Activated naive CD4-positive, alpha-beta T cell treated with anti-CD3 and anti-CD28 coated beads for 36 hours (primary cell): ENCODE measurements at regions of chr3 and their contacts with region 1.

Region 1: DNA sequence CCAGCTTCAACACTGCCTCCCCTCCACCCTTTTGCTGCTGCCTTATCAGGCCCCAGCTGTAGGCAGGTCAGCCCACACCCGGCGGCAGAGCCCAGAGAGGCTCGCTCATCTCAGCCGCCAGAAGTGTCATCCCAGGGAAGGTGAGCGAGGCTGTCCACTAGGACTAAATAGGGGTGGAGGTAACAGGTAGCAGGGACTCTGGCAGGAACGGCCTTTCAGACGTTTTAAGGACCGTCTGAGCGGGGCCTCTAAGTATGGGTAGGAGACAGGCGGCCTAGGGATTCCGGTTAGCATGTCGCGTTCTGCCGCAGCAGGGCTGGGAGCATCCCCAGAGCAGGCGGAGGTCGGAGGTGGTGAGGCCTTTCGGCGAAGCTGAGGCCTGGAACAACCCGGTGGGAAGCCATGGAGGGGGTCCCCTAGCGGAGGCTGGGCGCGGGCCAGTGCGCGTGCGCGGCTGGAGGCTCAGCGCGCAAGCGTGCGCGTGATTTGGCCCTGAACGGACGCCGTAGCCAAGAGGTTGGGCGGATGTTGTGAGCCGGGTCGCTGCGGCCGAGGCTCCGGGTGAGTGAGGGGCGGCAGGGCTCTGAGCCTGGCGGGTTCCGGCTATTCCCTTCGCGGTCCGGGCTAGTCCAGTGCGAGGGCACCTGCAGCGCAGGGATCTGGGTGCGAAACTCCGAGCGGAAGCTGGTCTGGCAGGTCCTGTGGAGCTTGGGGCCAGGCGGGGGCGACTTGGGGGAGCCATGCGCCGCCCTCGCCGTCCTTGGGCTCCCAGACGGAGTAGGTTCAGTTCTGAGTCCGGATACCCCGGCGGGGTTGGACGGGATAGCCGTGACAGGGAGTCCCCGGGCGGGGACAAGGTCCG is at the starts of genes MST1 and RNF123:
- DNase-seq: peak; percentile 93
- H3K4me3 Mint-ChIP-seq: peak within 1 kb of the TSS; percentile 97
- H3K27ac Mint-ChIP-seq: peak within 1 kb of the TSS; percentile 83
- H3K4me1 Mint-ChIP-seq: peaks cover 33% of the 10 kb centered on the region
- H3K27me3 Mint-ChIP-seq: peaks cover 4% of the 10 kb centered on the region
- total RNA-seq, gene MST1: 10.7 to 13.1 TPM
- total RNA-seq, gene RNF123: 20.3 to 21.5 TPM

Region 2: GRCh38 chr3:49582177-49582576 is 107.1 kb before region 1 on chr3:
- CTCF ChIA-PET with region 1: no interaction called
- intact Hi-C with region 1: no loop called
- DNase-seq: no peak
- H3K4me3 Mint-ChIP-seq: no peak overlapping the region
- H3K27ac Mint-ChIP-seq: no peak overlapping the region
- H3K4me1 Mint-ChIP-seq: no peaks in the 10 kb centered on the region
- H3K27me3 Mint-ChIP-seq: no peaks in the 10 kb centered on the region

Region 3: GRCh38 chr3:49723628-49724551 is 34.6 kb after region 1 on chr3 and contains the start of gene GMPPB:
- CTCF ChIA-PET with region 1: no interaction called
- intact Hi-C with region 1: loop called (anchors 5 kb)
- DNase-seq: peak; percentile 96
- H3K4me3 Mint-ChIP-seq: peak within 1 kb of the TSS; percentile 96
- H3K27ac Mint-ChIP-seq: peak within 1 kb of the TSS; percentile 95
- H3K4me1 Mint-ChIP-seq: peaks cover 33% of the 10 kb centered on the region
- H3K27me3 Mint-ChIP-seq: no peaks in the 10 kb centered on the region
- total RNA-seq, gene GMPPB: 25.6 to 27.4 TPM

Region 4: GRCh38 chr3:50078622-50079021 is 389.3 kb after region 1 on chr3:
- CTCF ChIA-PET with region 1: no interaction called
- intact Hi-C with region 1: no loop called
- DNase-seq: no peak
- H3K4me3 Mint-ChIP-seq: no peak overlapping the region
- H3K27ac Mint-ChIP-seq: no peak overlapping the region
- H3K4me1 Mint-ChIP-seq: peaks cover 18% of the 10 kb centered on the region
- H3K27me3 Mint-ChIP-seq: no peaks in the 10 kb centered on the region